Dorsolateral prefrontal cortex (tissue), 120 donors: ENCODE measurements at regions of chr10 and their contacts with region 1.

Region 1: DNA sequence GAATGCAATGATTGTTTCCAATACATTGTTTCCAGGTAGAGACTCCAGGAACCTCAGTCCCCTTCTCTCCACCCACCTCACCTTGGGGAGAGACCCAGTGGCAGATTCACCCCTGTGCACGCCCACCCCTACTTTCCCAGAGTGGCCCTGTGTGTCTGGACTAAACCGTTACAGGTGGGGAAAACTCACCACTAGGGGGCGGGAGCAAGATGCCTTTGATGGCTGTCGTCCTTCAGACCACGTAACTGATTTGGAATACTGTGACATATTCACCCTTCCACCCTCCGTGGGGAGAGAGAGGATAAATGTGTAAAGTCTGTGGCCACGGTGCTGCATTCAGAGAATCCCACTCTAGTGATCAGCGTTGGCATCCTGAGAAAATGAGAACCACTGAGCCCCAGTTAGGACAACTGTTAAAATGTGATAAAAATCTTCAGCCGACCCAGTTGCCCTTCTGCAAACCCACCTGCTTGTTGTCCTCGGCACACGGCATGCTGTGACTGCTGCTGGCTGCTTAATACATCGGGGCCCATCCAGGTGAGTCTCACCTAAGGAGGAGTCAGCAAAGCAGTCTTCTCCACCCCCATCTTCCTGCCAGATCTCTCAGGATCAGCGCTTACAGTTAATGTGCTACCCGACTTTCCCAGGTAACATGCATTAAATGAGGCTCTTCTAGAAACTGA is 41.5 kb upstream of the NMT2 start:
- DNase-seq: peak; percentile 74 to 94 (median 88)
- H3K4me3 ChIP-seq: peak overlapping the region in 7 of 59 donors; percentile 2 to 26 (median 15)
- H3K27ac ChIP-seq: peak overlapping the region in 34 of 59 donors; percentile 8 to 75 (median 40)
- H3K27me3 ChIP-seq: no peaks in the 10 kb centered on the region
- CTCF ChIP-seq: peak; percentile 77 to 98 (median 91)

Region 2: GRCh38 chr10:15254808-15255648 is 45.1 kb after region 1 on chr10:
- intact Hi-C with region 1: loop called (anchors 2 to 5 kb)
- DNase-seq: peak in 5 of 10 donors; percentile 43 to 76 (median 49)
- H3K4me3 ChIP-seq: peak overlapping the region; percentile 4 to 75 (median 52)
- H3K27ac ChIP-seq: peak overlapping the region; percentile 48 to 95 (median 88)
- H3K27me3 ChIP-seq: no peaks in the 10 kb centered on the region
- CTCF ChIP-seq: peak in 6 of 56 donors; percentile 11 to 22 (median 14)

Region 3: DNA sequence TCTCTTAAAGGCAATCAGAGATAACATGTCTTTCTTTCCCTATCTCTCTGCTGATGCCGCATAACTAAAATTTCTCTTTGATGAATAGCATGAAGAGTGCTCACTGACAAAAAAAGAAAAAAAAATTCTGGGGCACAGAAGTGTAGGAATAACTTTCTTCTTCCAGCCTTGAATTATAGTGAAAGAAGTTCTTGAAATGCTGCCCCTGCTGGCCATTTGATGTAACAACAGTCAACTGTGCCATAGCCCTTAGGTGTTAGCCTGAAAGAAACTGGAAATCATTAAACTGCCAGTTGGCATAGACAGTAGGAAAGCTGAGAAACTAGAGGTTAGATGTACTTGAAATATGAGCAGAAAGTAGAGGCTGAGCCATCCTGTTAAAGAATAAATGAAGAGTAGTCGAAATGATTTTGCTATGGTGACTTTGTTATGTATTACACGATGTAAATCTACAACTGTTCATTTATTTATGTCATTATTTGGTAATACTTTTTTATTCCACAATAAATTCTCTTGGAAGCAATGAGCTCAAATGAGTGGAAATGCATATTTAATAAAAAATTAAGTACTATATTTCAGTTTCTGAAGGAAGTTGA is 209.4 kb after region 1 on chr10:
- intact Hi-C with region 1: loop called in 1 of 2 experiments (anchors 5 kb)
- DNase-seq: peak in 3 of 10 donors; percentile 14 to 52 (median 29)
- H3K4me3 ChIP-seq: no peak overlapping the region
- H3K27ac ChIP-seq: no peak overlapping the region
- H3K27me3 ChIP-seq: no peaks in the 10 kb centered on the region
- CTCF ChIP-seq: peak; percentile 63 to 91 (median 82)